GM12878 (cell line): ENCODE measurements at regions of chr6 and their contacts with region 1.

Region 1: DNA sequence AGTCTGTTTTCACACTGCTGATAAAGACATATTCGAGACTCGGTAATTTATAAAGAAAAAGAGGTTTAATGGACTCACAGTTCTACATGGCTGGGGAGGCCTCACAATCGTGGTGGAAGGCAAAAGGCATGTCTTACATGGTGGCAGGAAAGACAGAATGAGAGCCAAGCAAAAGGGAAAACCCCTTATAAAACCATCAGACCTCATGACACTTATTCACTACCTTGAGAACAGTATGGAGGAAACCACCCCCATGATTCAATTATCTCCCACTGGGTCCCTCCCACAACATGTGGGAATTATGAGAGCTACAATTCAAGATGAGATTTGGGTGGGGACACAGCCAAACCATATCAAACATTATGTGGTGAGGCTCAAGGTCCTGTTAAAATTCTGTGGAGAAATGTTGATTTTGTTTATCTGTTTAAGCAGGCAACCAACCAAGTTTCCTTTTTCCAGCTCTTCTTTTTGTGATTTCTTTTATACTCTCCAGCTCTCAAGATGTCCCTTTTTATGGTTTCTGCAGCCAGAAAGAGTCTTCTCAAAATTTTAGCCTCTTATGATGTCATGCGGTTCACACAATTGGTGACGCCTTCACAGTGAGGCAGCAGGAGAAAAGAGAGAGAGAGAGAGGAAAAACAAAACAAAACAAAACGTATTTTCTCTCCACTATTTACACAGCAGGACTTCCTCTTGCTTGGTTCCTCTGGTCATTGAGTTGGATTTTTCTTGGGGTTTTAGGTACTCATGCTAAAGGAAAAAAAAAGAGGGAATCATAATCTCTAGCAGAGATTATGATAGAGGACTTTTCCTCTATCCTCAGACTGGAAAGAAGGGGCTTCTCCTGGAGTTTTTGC is 18.0 kb downstream of the AIG1 start:
- DNase-seq: no peak
- ATAC-seq: no peak
- H3K4me3 ChIP-seq: no peak overlapping the region
- H3K27ac ChIP-seq: no peak overlapping the region
- H3K4me1 ChIP-seq: no peaks in the 10 kb centered on the region
- H3K27me3 ChIP-seq: no peaks in the 10 kb centered on the region
- CTCF ChIP-seq: no peak
- EP300 ChIP-seq: no peak
- POLR2A ChIP-seq: no peak
- RAD21 ChIP-seq: no peak

Region 2: GRCh38 chr6:143090314-143091044 is 11.8 kb after region 1 on chr6:
- CTCF ChIA-PET with region 1: interaction called, 3 read pairs
- POLR2A ChIA-PET with region 1: interaction called, 11 read pairs
- RAD21 ChIA-PET with region 1: no interaction called
- SMC1A ChIA-PET with region 1: interaction called, 4 read pairs
- in situ Hi-C with region 1: no loop called
- intact Hi-C with region 1: no loop called
- DNase-seq: no peak
- ATAC-seq: no peak
- H3K4me3 ChIP-seq: no peak overlapping the region
- H3K27ac ChIP-seq: no peak overlapping the region
- H3K4me1 ChIP-seq: no peaks in the 10 kb centered on the region
- H3K27me3 ChIP-seq: no peaks in the 10 kb centered on the region
- CTCF ChIP-seq: no peak
- EP300 ChIP-seq: no peak
- POLR2A ChIP-seq: no peak
- RAD21 ChIP-seq: no peak

Region 3: DNA sequence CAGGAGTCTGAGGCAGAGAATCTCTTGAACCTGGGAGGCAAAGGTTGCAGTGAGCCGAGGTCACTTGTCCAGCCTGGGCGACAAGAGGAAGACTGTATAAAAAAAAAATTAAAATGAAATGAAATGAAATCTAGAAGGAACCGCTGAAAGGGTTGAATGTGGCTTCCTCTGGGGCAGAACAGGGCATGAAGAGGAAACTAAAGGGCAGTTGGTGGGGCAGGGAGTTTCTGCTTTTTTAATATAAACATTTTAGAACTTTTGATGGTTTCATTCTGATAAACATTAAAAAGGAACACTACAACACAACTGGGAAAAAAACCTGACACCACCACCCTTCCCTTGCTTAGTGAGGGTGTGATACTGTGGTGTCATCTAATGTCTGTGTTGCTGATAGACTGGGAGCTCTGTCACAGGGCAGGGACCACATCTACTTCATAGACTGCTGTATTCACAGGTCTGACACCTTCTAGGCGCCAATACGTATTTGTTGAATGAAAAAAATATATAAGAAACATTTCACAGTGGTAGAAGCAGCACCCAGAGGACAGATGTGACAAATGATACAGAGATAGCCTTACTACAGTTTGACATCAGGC is 242.9 kb after region 1 on chr6:
- CTCF ChIA-PET with region 1: no interaction called
- POLR2A ChIA-PET with region 1: no interaction called
- RAD21 ChIA-PET with region 1: no interaction called
- SMC1A ChIA-PET with region 1: no interaction called
- in situ Hi-C with region 1: no loop called
- intact Hi-C with region 1: no loop called
- DNase-seq: no peak
- ATAC-seq: no peak
- H3K4me3 ChIP-seq: no peak overlapping the region
- H3K27ac ChIP-seq: no peak overlapping the region
- H3K4me1 ChIP-seq: no peaks in the 10 kb centered on the region
- H3K27me3 ChIP-seq: no peaks in the 10 kb centered on the region
- CTCF ChIP-seq: no peak
- EP300 ChIP-seq: no peak
- POLR2A ChIP-seq: no peak
- RAD21 ChIP-seq: no peak